Endothelial cell of umbilical vein (primary cell): ENCODE measurements at regions of chr5 and their contacts with region 1.

Region 1: DNA sequence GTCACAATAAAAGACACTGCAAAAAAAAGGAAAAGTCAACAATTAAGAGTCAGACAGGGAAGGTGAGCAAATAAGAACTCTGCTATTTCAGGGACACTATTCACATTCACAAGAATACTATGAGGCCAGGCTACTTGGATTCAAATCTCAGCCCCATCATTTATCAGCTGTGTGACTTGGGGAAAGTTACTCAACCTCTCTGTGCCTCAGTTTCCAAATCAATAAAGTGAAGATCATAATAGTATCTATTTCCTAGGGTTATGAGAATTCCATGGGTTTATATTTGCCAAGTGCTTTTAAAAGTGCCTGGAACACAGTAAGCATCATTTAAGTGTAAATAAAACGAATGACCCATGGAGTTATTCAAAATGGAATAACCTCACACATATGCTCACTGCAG is 56.4 kb downstream of the ALDH7A1 start:
- DNase-seq: no peak
- H3K4me3 ChIP-seq: no peak overlapping the region
- H3K27ac ChIP-seq: no peak overlapping the region
- H3K4me1 ChIP-seq: no peaks in the 10 kb centered on the region
- H3K27me3 ChIP-seq: no peaks in the 10 kb centered on the region
- CTCF ChIP-seq: no peak
- POLR2A ChIP-seq: no peak

Region 2: GRCh38 chr5:126234563-126235195 is 303.9 kb before region 1 on chr5:
- CTCF ChIA-PET with region 1: interaction called, 3 read pairs
- POLR2A ChIA-PET with region 1: no interaction called
- dilution Hi-C with region 1: no loop called
- intact Hi-C with region 1: loop called (anchors 2 kb)
- DNase-seq: peak; percentile 22
- H3K4me3 ChIP-seq: no peak overlapping the region
- H3K27ac ChIP-seq: no peak overlapping the region
- H3K4me1 ChIP-seq: no peaks in the 10 kb centered on the region
- H3K27me3 ChIP-seq: no peaks in the 10 kb centered on the region
- CTCF ChIP-seq: peak; percentile 38 to 51
- POLR2A ChIP-seq: no peak

Region 3: DNA sequence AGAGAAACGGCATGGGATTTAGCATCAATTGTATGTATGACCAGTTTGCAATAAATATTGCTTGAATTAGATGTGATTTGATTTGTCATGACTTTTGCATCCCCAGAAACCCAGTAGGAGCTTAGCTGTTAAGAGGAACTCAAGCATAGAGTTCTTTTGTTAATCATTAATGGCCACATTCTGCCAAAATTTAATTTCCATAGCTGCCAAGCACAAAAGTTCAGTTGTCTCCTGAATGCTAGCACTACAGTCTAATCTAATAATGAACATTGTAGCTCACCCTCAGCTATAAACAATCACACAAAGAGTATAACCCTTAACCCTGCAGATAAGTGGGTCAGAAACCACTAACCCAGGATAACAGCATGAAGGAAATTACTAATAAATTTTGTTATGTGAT is 285.2 kb before region 1 on chr5:
- CTCF ChIA-PET with region 1: no interaction called
- POLR2A ChIA-PET with region 1: no interaction called
- dilution Hi-C with region 1: no loop called
- intact Hi-C with region 1: no loop called
- DNase-seq: no peak
- H3K4me3 ChIP-seq: no peak overlapping the region
- H3K27ac ChIP-seq: no peak overlapping the region
- H3K4me1 ChIP-seq: no peaks in the 10 kb centered on the region
- H3K27me3 ChIP-seq: no peaks in the 10 kb centered on the region
- CTCF ChIP-seq: no peak
- POLR2A ChIP-seq: no peak